HepG2 (cell line): ENCODE measurements at regions of chr11 and their contacts with region 1.

Region 1: DNA sequence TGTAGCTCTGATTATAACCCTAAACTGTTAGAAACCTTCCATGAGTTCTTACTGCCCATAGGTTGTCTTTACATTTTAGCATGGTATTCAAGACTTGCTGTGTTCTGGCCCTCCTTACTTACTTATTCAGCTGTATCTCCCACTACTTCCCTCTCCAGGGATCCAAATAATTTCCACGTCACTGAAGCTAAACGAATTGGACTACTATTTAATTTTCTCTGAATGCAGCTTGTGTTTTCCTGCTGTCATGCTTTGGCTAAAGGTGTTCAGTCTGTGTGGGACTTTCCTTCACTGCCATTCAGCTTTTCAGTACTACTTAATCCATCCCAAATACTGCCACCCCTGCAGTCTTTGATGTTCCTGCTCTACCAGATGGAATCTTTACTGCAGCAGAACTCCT is 88.3 kb downstream of the UVRAG start:
- DNase-seq: no peak
- ATAC-seq: no peak
- H3K4me3 ChIP-seq: no peak overlapping the region
- H3K27ac ChIP-seq: no peak overlapping the region
- H3K4me1 ChIP-seq: no peaks in the 10 kb centered on the region
- H3K27me3 ChIP-seq: no peaks in the 10 kb centered on the region
- CTCF ChIP-seq: no peak
- EP300 ChIP-seq: no peak
- POLR2A ChIP-seq: no peak
- RAD21 ChIP-seq: no peak

Region 2: DNA sequence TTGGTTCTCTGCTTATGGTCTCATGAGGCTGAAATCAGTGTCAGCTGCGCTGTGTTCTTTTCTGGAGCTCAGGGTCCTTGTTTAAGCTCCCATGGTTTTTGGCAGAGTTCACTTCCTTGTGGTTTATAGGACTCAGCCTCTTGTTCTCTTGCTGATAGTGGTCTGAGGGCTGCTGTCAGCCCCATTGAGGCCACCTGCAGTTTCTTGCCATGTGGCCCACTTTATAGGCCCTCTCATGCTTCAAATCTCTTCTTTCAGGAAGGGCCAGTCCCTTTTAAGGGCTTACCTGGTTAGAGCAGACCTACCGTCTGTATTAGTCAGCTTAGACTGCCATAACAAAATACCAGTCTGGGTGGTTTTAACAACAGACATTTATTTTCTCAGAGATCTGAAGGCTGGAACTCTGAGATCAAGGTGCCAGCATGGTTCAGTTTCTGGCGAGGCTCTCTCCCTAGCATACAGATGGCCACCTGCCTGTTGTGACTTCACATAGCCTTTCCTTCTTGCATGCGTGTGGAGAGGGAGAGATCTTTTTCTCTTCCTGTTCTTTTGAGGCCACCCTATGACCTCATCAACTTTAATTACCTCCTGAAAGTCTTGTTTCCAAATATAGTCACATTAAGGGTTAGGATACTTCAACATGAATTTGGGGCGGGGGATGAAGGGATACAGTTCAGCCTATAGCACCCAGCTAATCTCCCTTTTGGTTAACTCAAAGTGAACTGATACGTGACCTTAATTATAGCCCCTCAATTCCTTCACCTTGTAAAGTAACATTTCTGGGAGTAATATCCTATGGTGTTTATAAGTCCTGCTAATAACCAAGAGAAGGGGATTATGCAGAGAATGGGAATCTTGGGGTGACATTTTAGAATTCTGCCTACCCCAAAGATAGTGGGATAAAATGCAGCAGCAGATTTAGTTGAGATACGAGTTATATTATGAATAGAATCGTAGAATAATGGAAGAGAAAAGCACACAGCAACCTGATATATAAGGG is 43.6 kb after region 1 on chr11:
- CTCF ChIA-PET with region 1: no interaction called
- POLR2A ChIA-PET with region 1: no interaction called
- in situ Hi-C with region 1: no loop called
- intact Hi-C with region 1: no loop called
- DNase-seq: no peak
- ATAC-seq: no peak
- H3K4me3 ChIP-seq: no peak overlapping the region
- H3K27ac ChIP-seq: no peak overlapping the region
- H3K4me1 ChIP-seq: no peaks in the 10 kb centered on the region
- H3K27me3 ChIP-seq: no peaks in the 10 kb centered on the region
- CTCF ChIP-seq: no peak
- EP300 ChIP-seq: no peak
- POLR2A ChIP-seq: no peak
- RAD21 ChIP-seq: no peak

Region 3: GRCh38 chr11:76062733-76063132 is 159.5 kb after region 1 on chr11:
- CTCF ChIA-PET with region 1: no interaction called
- POLR2A ChIA-PET with region 1: no interaction called
- in situ Hi-C with region 1: no loop called
- intact Hi-C with region 1: no loop called
- DNase-seq: no peak
- ATAC-seq: no peak
- H3K4me3 ChIP-seq: no peak overlapping the region
- H3K27ac ChIP-seq: no peak overlapping the region
- H3K4me1 ChIP-seq: no peaks in the 10 kb centered on the region
- H3K27me3 ChIP-seq: no peaks in the 10 kb centered on the region
- CTCF ChIP-seq: no peak
- EP300 ChIP-seq: no peak
- POLR2A ChIP-seq: no peak
- RAD21 ChIP-seq: no peak

Region 4: GRCh38 chr11:76152086-76152681 is 248.9 kb after region 1 on chr11:
- CTCF ChIA-PET with region 1: no interaction called
- POLR2A ChIA-PET with region 1: no interaction called
- in situ Hi-C with region 1: loop called (anchors 5 kb)
- intact Hi-C with region 1: no loop called
- DNase-seq: peak; percentile 70
- ATAC-seq: peak; percentile 57
- H3K4me3 ChIP-seq: peak overlapping the region; percentile 28 to 68 (median 46); a peak in 5 of 6 replicates
- H3K27ac ChIP-seq: no peak overlapping the region
- H3K4me1 ChIP-seq: peaks cover 94% of the 10 kb centered on the region
- H3K27me3 ChIP-seq: no peaks in the 10 kb centered on the region
- CTCF ChIP-seq: peak; percentile 98
- EP300 ChIP-seq: no peak
- POLR2A ChIP-seq: no peak
- RAD21 ChIP-seq: peak; percentile 83

Region 5: DNA sequence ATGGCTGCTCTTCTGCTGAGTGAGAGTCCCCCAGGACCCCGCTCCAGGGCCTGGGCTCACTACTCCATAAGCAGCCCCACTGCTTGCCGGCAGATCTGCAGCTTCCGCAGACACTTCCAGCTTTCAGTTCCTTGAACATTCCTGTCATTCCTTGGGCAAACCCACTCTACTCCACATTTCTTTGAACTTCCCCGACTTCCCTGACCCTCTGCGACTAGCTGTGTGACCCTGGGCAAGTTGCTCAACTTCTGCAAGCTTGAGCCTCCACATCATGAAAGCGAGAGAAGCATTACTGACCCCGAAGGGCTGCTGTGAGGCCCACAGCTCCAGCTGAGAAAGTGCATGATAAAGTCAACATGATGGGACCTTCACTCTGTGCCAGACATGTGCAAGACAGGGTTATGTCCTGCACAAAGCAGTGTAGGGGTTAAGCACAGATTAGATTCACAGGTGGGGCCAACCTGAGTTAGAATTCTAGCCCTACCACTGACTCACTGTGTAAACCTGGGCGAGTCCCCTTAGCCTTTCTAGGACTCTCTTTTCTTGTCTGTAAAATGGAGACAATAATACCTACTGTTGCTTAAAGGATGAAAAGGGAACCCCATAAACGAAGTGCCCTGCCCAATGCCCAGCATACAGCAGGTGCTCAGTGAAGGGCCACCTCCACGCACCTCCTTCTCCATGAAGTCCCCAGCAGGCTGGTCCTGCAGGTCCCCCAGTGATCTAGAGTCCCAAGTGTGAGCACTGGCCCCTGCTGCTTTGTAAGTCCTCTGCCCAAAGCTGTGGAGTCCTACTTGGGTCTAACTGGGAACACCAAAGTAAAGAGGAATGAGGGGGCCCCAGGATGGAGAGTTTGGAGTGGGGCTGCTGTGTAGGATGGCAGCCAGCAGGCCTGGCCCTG is 426.1 kb after region 1 on chr11:
- CTCF ChIA-PET with region 1: no interaction called
- POLR2A ChIA-PET with region 1: no interaction called
- in situ Hi-C with region 1: no loop called
- intact Hi-C with region 1: no loop called
- DNase-seq: peak; percentile 90
- ATAC-seq: peak; percentile 85
- H3K4me3 ChIP-seq: peak overlapping the region in 1 of 3 experiments; percentile 37; a peak in 1 of 6 replicates
- H3K27ac ChIP-seq: no peak overlapping the region
- H3K4me1 ChIP-seq: peaks cover 35% of the 10 kb centered on the region
- H3K27me3 ChIP-seq: no peaks in the 10 kb centered on the region
- CTCF ChIP-seq: no peak
- EP300 ChIP-seq: peak in 1 of 2 experiments; percentile 73; a peak in 2 of 4 replicates
- POLR2A ChIP-seq: no peak
- RAD21 ChIP-seq: no peak